H1 (cell line): ENCODE measurements at regions of chr19 and their contacts with region 1.

Region 1: GRCh38 chr19:35417713-35418534 is 30.1 kb upstream of the FFAR2 start:
- DNase-seq: no peak
- H3K4me3 ChIP-seq: no peak overlapping the region
- H3K27ac ChIP-seq: no peak overlapping the region
- H3K4me1 ChIP-seq: no peaks in the 10 kb centered on the region
- H3K27me3 ChIP-seq: no peaks in the 10 kb centered on the region
- CTCF ChIP-seq: no peak
- EP300 ChIP-seq: no peak
- POLR2A ChIP-seq: no peak
- RAD21 ChIP-seq: no peak

Region 2: DNA sequence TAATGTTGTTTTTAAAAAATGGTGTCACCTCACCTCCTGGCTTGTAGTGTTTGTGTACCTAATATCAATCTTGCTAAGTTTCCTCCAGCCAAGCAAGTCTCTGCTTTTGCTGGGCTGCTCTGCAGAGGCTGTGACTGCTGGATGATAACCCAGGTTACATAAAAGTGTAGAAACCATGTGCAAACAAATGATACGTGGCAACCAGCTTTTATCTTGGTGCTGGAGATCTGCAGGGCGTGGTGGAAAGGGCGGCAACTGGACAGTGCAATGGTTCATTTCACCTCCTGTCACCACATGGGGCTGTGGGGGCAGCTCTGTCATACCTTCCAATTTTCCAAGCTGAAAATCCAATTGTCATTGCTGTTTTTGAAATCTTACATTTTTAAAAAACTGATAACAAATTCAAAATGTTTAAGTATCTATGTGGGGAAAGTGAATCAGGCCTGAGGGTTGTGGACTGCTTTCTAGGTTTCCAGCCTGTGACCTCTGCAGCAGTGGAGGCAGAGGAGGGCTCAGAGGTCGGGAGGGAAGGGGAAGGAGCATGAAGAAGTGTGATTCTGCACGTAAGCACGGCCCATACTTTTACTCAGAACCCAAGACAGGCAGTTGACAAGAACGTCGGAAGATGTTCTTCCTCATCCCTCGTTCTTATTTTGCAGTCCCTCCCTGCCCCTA is 37.3 kb before region 1 on chr19:
- CTCF ChIA-PET with region 1: no interaction called
- POLR2A ChIA-PET with region 1: no interaction called
- DNase-seq: no peak
- H3K4me3 ChIP-seq: no peak overlapping the region
- H3K27ac ChIP-seq: no peak overlapping the region
- H3K4me1 ChIP-seq: no peaks in the 10 kb centered on the region
- H3K27me3 ChIP-seq: no peaks in the 10 kb centered on the region; a peak in 1 of 7 replicates
- CTCF ChIP-seq: no peak
- EP300 ChIP-seq: no peak
- POLR2A ChIP-seq: no peak
- RAD21 ChIP-seq: no peak

Region 3: DNA sequence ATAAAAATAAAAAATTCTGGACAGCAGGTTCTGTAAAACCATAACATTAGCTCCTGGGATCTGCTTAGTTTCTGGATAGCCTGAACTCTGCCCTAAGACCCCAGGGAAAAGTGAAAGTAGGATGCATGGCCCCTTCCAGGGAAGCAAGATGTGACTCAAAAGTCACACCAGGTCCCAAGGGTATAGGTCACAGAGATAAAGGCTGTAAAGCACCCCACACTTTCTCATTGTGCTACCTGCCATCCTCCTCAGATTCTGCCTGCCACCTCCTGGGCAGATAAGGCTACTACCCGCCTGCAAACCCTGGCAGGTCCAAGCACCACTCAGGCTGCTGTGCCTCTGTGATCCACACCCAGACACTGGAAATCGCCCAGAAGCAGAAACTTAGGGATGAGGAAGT is 50.7 kb after region 1 on chr19:
- CTCF ChIA-PET with region 1: interaction called, 18 read pairs
- POLR2A ChIA-PET with region 1: no interaction called
- DNase-seq: no peak
- H3K4me3 ChIP-seq: no peak overlapping the region
- H3K27ac ChIP-seq: no peak overlapping the region
- H3K4me1 ChIP-seq: no peaks in the 10 kb centered on the region
- H3K27me3 ChIP-seq: no peaks in the 10 kb centered on the region
- CTCF ChIP-seq: peak; percentile 83 to 84 (median 84)
- EP300 ChIP-seq: no peak
- POLR2A ChIP-seq: no peak
- RAD21 ChIP-seq: peak; percentile 80 to 88